A673 (cell line): ENCODE measurements at regions of chr11 and their contacts with region 1.

Region 1: DNA sequence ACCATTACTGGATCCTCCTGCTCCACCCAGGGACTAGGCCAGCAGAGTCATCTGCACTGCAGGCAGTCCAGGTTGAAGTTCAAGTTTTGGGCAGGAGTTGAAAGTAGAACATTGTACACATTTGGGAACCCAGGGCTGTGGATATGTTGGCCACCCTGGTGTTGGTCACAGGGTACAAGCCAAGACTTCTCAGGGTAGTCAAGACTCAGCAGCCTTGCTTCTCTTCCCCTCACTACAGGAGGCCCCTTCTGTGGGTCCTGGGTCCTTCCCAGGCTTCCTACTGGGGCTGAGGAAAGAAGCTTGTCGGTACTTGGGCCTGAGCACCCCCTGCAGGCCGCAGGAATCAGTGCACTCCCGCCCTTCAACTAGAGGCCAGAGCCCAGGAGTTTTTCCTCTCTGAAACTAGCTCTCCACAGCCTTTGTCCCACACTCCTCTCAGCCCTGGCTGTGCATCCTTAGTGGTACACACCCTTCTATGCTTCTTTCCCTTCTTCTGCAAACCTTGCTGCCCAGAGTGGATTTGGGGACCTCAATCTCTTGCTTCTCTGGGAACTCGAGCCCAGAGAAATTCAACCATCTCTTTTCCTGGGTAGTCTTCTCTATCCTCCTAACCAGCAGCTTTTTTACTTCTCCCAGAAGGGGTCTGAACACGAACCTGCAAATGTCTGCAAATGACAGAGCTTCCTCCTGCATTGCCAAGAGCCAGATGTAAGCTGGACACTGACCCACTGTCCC is 2.6 kb upstream of the HPX start:
- DNase-seq: peak; percentile 79
- H3K4me3 ChIP-seq: no peak overlapping the region
- H3K27ac ChIP-seq: peak overlapping the region; percentile 40
- H3K4me1 ChIP-seq: peaks cover 4% of the 10 kb centered on the region
- H3K27me3 ChIP-seq: no peaks in the 10 kb centered on the region
- CTCF ChIP-seq: peak; percentile 87

Region 2: GRCh38 chr11:6397636-6398035 is 45.8 kb before region 1 on chr11:
- CTCF ChIA-PET with region 1: no interaction called
- POLR2A ChIA-PET with region 1: no interaction called
- intact Hi-C with region 1: no loop called
- DNase-seq: no peak
- H3K4me3 ChIP-seq: no peak overlapping the region
- H3K27ac ChIP-seq: peak overlapping the region; percentile 67
- H3K4me1 ChIP-seq: peaks cover 13% of the 10 kb centered on the region
- H3K27me3 ChIP-seq: no peaks in the 10 kb centered on the region
- CTCF ChIP-seq: no peak

Region 3: GRCh38 chr11:6419009-6419631 is 24.3 kb before region 1 on chr11 and contains the start of gene APBB1:
- CTCF ChIA-PET with region 1: interaction called, 4 read pairs
- POLR2A ChIA-PET with region 1: interaction called, 7 read pairs
- intact Hi-C with region 1: loop called (anchors 2 kb)
- DNase-seq: peak; percentile 76
- H3K4me3 ChIP-seq: peak within 1 kb of the TSS; percentile 87
- H3K27ac ChIP-seq: peak within 1 kb of the TSS; percentile 90
- H3K4me1 ChIP-seq: peaks cover 11% of the 10 kb centered on the region
- H3K27me3 ChIP-seq: no peaks in the 10 kb centered on the region
- CTCF ChIP-seq: no peak
- total RNA-seq, gene APBB1: 81.1 and 83.8 TPM in 2 replicates